CD8-positive, alpha-beta memory T cell (primary cell): ENCODE measurements at regions of chr6 and their contacts with region 1.

Region 1: DNA sequence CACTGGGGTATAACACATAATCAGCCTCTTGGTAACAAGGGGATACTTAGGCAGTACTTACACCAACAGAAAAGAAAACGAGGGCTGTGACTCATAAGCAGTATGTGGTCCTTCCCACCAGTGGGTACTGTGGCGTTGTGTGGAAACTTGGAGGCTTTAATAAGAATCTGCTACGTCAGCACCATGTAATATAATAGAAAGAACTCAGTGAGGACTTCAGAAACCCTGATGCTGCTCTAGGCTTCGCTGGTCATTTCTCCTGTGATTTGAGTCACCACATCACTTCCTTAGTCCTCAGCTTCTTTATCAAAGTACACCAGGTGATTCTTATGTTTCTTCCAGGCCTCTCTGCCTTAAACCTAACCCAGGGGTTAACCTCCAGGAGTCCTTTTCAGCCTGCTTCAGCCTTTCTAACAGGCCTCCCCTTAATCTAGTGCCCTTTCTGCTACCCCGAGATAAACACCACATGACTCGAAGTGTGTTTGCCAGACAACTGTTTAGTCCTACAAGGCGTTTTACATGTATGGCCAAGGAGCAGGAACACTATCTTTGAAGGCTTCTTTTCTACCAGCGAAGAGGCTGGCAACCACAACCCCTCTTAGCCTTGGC is 68.5 kb downstream of the FYN start:
- DNase-seq: peak; percentile 59 to 88 (median 63)
- H3K4me3 ChIP-seq: no peak overlapping the region
- H3K4me3 Mint-ChIP-seq: peak overlapping the region; percentile 32 to 79 (median 66)
- H3K27ac ChIP-seq: peak overlapping the region; percentile 49
- H3K27ac Mint-ChIP-seq: peak overlapping the region; percentile 91 to 99 (median 96)
- H3K4me1 ChIP-seq: peaks cover 70% of the 10 kb centered on the region
- H3K4me1 Mint-ChIP-seq: peaks cover 85 to 99% (median 93%) of the 10 kb centered on the region in 3 donors
- H3K27me3 ChIP-seq: no peaks in the 10 kb centered on the region
- H3K27me3 Mint-ChIP-seq: peaks cover 0 to 2% of the 10 kb centered on the region in 2 donors

Region 2: GRCh38 chr6:111784433-111784832 is 20.3 kb before region 1 on chr6:
- CTCF ChIA-PET with region 1: interaction called, 11 read pairs
- POLR2A ChIA-PET with region 1: no interaction called
- DNase-seq: no peak
- H3K4me3 ChIP-seq: no peak overlapping the region
- H3K4me3 Mint-ChIP-seq: peak overlapping the region in 4 of 7 donors; percentile 16 to 43 (median 36)
- H3K27ac ChIP-seq: no peak overlapping the region
- H3K27ac Mint-ChIP-seq: peak overlapping the region; percentile 73 to 93 (median 84)
- H3K4me1 ChIP-seq: peaks cover 72% of the 10 kb centered on the region
- H3K4me1 Mint-ChIP-seq: peaks cover 59 to 71% (median 64%) of the 10 kb centered on the region in 3 donors
- H3K27me3 ChIP-seq: no peaks in the 10 kb centered on the region
- H3K27me3 Mint-ChIP-seq: no peaks in the 10 kb centered on the region

Region 3: GRCh38 chr6:111793711-111794111 is 11.0 kb before region 1 on chr6:
- CTCF ChIA-PET with region 1: interaction called, 11 read pairs
- POLR2A ChIA-PET with region 1: interaction called, 7 read pairs
- DNase-seq: peak; percentile 37 to 82 (median 53)
- H3K4me3 ChIP-seq: peak overlapping the region; percentile 64
- H3K4me3 Mint-ChIP-seq: peak overlapping the region; percentile 89 to 100 (median 94)
- H3K27ac ChIP-seq: peak overlapping the region; percentile 70
- H3K27ac Mint-ChIP-seq: peak overlapping the region in 7 of 8 donors; percentile 96 to 99 (median 98)
- H3K4me1 ChIP-seq: peaks cover 76% of the 10 kb centered on the region
- H3K4me1 Mint-ChIP-seq: peaks cover 6 to 69% (median 62%) of the 10 kb centered on the region in 3 donors
- H3K27me3 ChIP-seq: no peaks in the 10 kb centered on the region
- H3K27me3 Mint-ChIP-seq: no peaks in the 10 kb centered on the region